ENCODE measurements at regions of chr11 and their contacts with region 1.

Region 1: GRCh38 chr11:78079232-78080083 is at the start of gene NDUFC2:
- DNase-seq: peak; percentile 87
- H3K4me3 ChIP-seq: peak within 1 kb of the TSS; percentile 73
- H3K4me3 Mint-ChIP-seq: peak within 1 kb of the TSS; percentile 76
- H3K27ac Mint-ChIP-seq: peak within 1 kb of the TSS; percentile 52
- H3K4me1 ChIP-seq: peaks cover 49% of the 10 kb centered on the region
- H3K4me1 Mint-ChIP-seq: peaks cover 37% of the 10 kb centered on the region
- H3K27me3 ChIP-seq: no peaks in the 10 kb centered on the region
- H3K27me3 Mint-ChIP-seq: no peaks in the 10 kb centered on the region
- CTCF ChIP-seq: no peak
- total RNA-seq, gene NDUFC2: 732 and 805 TPM in 2 replicates

Region 2: GRCh38 chr11:78061088-78061921 is 18.2 kb before region 1 on chr11:
- CTCF ChIA-PET with region 1: interaction called, 4 read pairs
- POLR2A ChIA-PET with region 1: interaction called, 3 read pairs
- intact Hi-C with region 1: loop called (anchors 2 kb)
- DNase-seq: peak; percentile 52 to 65
- H3K4me3 ChIP-seq: no peak overlapping the region
- H3K4me3 Mint-ChIP-seq: no peak overlapping the region
- H3K27ac Mint-ChIP-seq: peak overlapping the region; percentile 70
- H3K4me1 ChIP-seq: peaks cover 31% of the 10 kb centered on the region
- H3K4me1 Mint-ChIP-seq: peaks cover 15% of the 10 kb centered on the region
- H3K27me3 ChIP-seq: no peaks in the 10 kb centered on the region
- H3K27me3 Mint-ChIP-seq: no peaks in the 10 kb centered on the region
- CTCF ChIP-seq: no peak

Region 3: GRCh38 chr11:78100676-78101456 is 21.4 kb after region 1 on chr11:
- CTCF ChIA-PET with region 1: interaction called, 26 read pairs
- POLR2A ChIA-PET with region 1: no interaction called
- intact Hi-C with region 1: loop called (anchors 1 kb)
- DNase-seq: no peak
- H3K4me3 ChIP-seq: no peak overlapping the region
- H3K4me3 Mint-ChIP-seq: no peak overlapping the region
- H3K27ac Mint-ChIP-seq: no peak overlapping the region
- H3K4me1 ChIP-seq: peaks cover 6% of the 10 kb centered on the region; the same call in 1 of the 2 replicates
- H3K4me1 Mint-ChIP-seq: peaks cover 19% of the 10 kb centered on the region
- H3K27me3 ChIP-seq: no peaks in the 10 kb centered on the region
- H3K27me3 Mint-ChIP-seq: no peaks in the 10 kb centered on the region
- CTCF ChIP-seq: no peak

Region 4: DNA sequence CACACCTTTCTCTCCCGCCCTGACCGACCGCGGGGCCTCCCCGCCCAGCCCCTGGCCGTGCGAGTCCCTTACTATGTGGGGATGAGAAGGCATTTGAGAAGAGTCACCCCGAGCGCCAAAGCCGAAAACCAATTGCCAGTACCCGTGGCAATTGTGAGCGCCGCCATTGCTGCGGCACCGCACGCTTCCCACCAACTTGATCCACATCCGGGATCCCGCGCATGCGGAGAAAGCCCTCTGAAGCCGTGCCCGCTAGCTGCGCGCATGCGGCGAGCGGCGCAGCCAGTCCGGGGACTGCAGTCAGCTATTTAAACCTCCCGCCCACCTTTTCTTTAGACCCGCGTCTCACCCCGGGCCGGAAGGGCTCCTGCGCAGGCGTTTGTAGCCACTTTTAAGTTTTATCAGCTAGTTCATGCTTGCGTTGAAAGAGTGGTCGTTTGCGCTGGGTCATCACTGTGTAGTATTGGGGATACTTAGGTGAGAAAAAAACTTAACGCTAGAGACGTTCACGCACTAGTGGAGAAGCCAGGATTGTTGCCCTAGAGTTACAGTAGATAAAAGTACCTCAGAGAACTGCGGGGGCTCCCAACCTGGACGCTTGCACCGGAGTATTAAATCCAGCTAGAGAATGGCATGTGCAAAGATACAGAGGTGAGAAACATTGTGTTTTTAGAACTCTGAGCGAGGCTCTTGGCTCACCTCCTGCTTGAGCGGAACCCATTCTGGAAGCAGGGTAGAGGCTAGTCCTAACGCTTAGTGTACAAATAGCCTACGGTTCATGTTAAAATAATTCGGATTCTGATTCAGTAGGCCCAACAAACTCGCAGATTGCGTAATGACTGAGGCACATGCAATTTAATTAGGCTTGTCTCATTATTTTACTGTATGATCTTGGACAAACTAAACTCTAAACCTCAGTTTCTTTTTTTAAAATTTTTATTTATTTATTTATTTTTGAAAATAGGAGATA is 60.2 kb after region 1 on chr11 and contains the start of gene ALG8:
- CTCF ChIA-PET with region 1: interaction called, 7 read pairs
- POLR2A ChIA-PET with region 1: interaction called, 12 read pairs
- intact Hi-C with region 1: loop called (anchors 2 kb)
- DNase-seq: peak; percentile 99
- H3K4me3 ChIP-seq: peak within 1 kb of the TSS; percentile 49
- H3K4me3 Mint-ChIP-seq: peak within 1 kb of the TSS; percentile 90
- H3K27ac Mint-ChIP-seq: peak within 1 kb of the TSS; percentile 83
- H3K4me1 ChIP-seq: peaks cover 5% of the 10 kb centered on the region
- H3K4me1 Mint-ChIP-seq: peaks cover 21% of the 10 kb centered on the region
- H3K27me3 ChIP-seq: no peaks in the 10 kb centered on the region
- H3K27me3 Mint-ChIP-seq: no peaks in the 10 kb centered on the region
- CTCF ChIP-seq: no peak
- total RNA-seq, gene ALG8: 188 and 191 TPM in 2 replicates

Measured in Caco-2 (cell line).